PC-9 (cell line): ENCODE measurements at regions of chr20 and their contacts with region 1.

Region 1: DNA sequence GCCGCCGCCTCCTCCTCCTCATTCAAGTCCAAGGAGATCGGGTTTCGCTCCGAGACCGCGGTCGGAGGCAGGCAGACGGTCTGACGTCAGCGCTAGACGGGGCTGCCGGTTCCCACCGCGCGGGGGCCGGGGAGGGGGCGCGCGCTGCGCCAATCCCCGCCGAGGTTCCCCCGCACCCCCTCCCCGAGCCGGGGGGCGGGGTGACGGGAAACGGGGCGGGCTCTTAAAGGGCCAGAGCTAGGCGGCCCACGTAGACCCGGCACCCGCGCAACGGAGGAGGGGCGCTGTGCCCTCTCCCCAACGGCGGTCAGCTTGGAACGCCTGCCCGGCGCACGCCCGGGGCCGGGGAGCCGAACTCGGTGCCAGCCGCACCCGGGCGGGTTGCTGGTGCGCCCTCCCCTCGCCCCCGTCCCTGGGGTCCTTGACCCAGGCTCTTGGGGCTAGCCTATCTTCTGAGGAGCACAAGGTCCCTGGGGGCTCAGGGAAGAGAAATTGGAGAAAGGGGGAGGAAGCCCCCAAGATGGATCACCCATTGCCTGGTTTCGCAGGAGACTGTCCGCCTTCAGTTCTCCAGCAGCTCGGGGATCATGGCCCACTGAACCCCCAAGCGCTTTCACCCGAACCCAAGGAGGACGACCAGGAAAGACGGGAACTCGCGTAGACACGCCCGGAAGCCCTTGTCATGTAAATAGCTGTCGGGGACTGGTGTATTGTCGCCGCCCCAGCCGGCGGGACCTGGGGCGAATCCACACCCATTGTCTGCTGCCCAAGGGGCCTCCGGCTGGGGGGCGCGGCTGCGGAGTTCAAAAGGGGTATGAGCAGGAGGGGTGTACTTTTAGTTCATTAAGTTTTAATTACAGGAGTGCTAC is at the start of gene PMEPA1:
- DNase-seq: peak; percentile 92 to 99
- H3K4me3 ChIP-seq: peak within 1 kb of the TSS; percentile 98
- H3K27ac ChIP-seq: peak within 1 kb of the TSS; percentile 77
- H3K4me1 ChIP-seq: peaks cover 59% of the 10 kb centered on the region
- H3K27me3 ChIP-seq: no peaks in the 10 kb centered on the region
- CTCF ChIP-seq: no peak
- total RNA-seq, gene PMEPA1: 163 and 177 TPM in 2 replicates

Region 2: GRCh38 chr20:57654363-57654997 is 55.7 kb before region 1 on chr20:
- CTCF ChIA-PET with region 1: no interaction called
- POLR2A ChIA-PET with region 1: no interaction called
- intact Hi-C with region 1: loop called (anchors 2 kb)
- DNase-seq: peak in 1 of 2 experiments; percentile 67
- H3K4me3 ChIP-seq: no peak overlapping the region
- H3K27ac ChIP-seq: no peak overlapping the region
- H3K4me1 ChIP-seq: no peaks in the 10 kb centered on the region
- H3K27me3 ChIP-seq: no peaks in the 10 kb centered on the region
- CTCF ChIP-seq: peak; percentile 98

Region 3: GRCh38 chr20:57698117-57698866 is 11.9 kb before region 1 on chr20:
- CTCF ChIA-PET with region 1: interaction called, 7 read pairs
- POLR2A ChIA-PET with region 1: interaction called, 25 read pairs
- intact Hi-C with region 1: loop called (anchors 2 kb)
- DNase-seq: peak; percentile 92 to 100
- H3K4me3 ChIP-seq: peak overlapping the region; percentile 44; the same call in 1 of the 2 replicates
- H3K27ac ChIP-seq: peak overlapping the region; percentile 96
- H3K4me1 ChIP-seq: peaks cover 96% of the 10 kb centered on the region
- H3K27me3 ChIP-seq: no peaks in the 10 kb centered on the region
- CTCF ChIP-seq: no peak

Region 4: GRCh38 chr20:57810511-57811373 is 100.6 kb after region 1 on chr20:
- CTCF ChIA-PET with region 1: no interaction called
- POLR2A ChIA-PET with region 1: interaction called, 6 read pairs
- intact Hi-C with region 1: loop called (anchors 2 kb)
- DNase-seq: peak; percentile 86 to 91
- H3K4me3 ChIP-seq: no peak overlapping the region
- H3K27ac ChIP-seq: peak overlapping the region; percentile 38; the same call in 1 of the 2 replicates
- H3K4me1 ChIP-seq: peaks cover 25% of the 10 kb centered on the region
- H3K27me3 ChIP-seq: no peaks in the 10 kb centered on the region
- CTCF ChIP-seq: no peak

Region 5: GRCh38 chr20:57902290-57902872 is 192.2 kb after region 1 on chr20:
- CTCF ChIA-PET with region 1: no interaction called
- POLR2A ChIA-PET with region 1: no interaction called
- intact Hi-C with region 1: loop called (anchors 2 kb)
- DNase-seq: peak; percentile 43 to 75
- H3K4me3 ChIP-seq: no peak overlapping the region
- H3K27ac ChIP-seq: no peak overlapping the region
- H3K4me1 ChIP-seq: peaks cover 30% of the 10 kb centered on the region
- H3K27me3 ChIP-seq: no peaks in the 10 kb centered on the region
- CTCF ChIP-seq: peak; percentile 45; the same call in 1 of the 2 replicates

Region 6: GRCh38 chr20:58087193-58087858 is 377.2 kb after region 1 on chr20:
- CTCF ChIA-PET with region 1: interaction called, 4 read pairs
- POLR2A ChIA-PET with region 1: no interaction called
- intact Hi-C with region 1: loop called (anchors 1 kb)
- DNase-seq: peak; percentile 50 to 52
- H3K4me3 ChIP-seq: no peak overlapping the region
- H3K27ac ChIP-seq: no peak overlapping the region
- H3K4me1 ChIP-seq: 0 out of 2 replicates have a peak, but pooled peaks cover 9% of the 10 kb centered on the region
- H3K27me3 ChIP-seq: no peaks in the 10 kb centered on the region
- CTCF ChIP-seq: peak; percentile 95